H1 (cell line): ENCODE measurements at regions of chr12 and their contacts with region 1.

Region 1: DNA sequence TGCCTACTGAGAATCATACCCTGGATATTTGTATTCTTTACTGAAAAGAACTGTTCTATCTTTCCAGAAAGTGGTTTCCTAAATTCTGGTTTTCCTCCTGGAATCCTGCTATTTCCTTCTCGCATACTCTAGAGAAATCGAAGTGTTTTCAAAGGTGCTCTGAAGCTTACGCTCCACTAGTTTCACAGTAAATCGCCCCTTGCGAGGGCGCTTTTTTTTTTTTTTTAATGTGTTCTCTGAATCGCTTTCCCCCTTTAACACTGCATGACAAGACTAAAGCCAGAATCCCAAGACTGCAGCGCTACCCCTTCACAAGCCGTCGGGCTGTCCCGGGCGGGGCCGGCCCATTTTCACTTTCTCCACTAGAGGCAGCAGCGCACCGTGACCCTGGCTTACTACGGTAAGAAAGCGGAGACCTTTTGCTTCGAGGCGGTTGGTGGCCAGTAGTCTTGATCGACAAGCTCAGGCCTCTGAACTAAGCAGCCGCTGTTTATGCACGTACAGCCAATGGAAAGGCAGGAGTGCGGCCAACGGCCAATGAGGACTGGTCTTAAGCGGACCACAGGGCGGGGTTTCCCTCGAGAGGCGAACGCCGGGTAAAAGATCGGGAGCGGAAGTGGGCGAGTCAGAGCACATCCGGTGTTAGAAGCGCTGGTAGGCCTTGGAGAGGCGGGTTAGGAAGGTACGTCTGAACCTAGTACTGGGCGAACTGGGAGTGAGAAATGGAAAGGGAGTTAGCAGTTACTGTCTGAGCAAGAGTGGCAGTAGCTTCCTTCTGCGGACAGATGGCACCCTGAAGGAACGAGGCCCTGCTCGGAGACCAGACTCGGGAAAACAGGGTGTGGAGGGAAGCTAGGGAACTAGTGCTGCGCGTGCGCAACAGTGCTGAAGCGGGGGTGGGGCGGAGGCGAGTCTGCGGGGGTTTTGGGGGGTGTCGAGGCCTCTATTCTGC is at the start of gene TMBIM6:
- DNase-seq: peak; percentile 99 to 100
- H3K4me3 ChIP-seq: peak within 1 kb of the TSS; percentile 74 to 95 (median 82)
- H3K27ac ChIP-seq: peak within 1 kb of the TSS; percentile 93
- H3K4me1 ChIP-seq: peaks cover 0 to 3% (median 2%) of the 10 kb centered on the region in 4 experiments; a peak in 2 of 7 replicates
- H3K27me3 ChIP-seq: no peaks in the 10 kb centered on the region
- CTCF ChIP-seq: peak; percentile 84 to 96 (median 86)
- EP300 ChIP-seq: peak in 1 of 2 experiments; percentile 20; a peak in 1 of 3 replicates
- POLR2A ChIP-seq: peak; percentile 99
- RAD21 ChIP-seq: peak; percentile 55 to 70
- total RNA-seq, gene TMBIM6: 413 and 423 TPM in 2 replicates

Region 2: GRCh38 chr12:49623142-49623904 is 117.9 kb before region 1 on chr12 and contains the start of gene PRPF40B:
- CTCF ChIA-PET with region 1: interaction called, 3 read pairs
- POLR2A ChIA-PET with region 1: interaction called, 17 read pairs
- DNase-seq: peak; percentile 78 to 95
- H3K4me3 ChIP-seq: peak within 1 kb of the TSS; percentile 50 to 73 (median 66)
- H3K27ac ChIP-seq: peak within 1 kb of the TSS; percentile 56; the same call in 1 of the 2 replicates
- H3K4me1 ChIP-seq: peaks cover 0 to 7% (median 3%) of the 10 kb centered on the region in 4 experiments; a peak in 6 of 7 replicates
- H3K27me3 ChIP-seq: no peaks in the 10 kb centered on the region
- CTCF ChIP-seq: peak; percentile 47 to 56 (median 54)
- EP300 ChIP-seq: 0 out of 3 replicates have a peak, but pooled peaks of 1 of the 2 experiments have one; percentile 7
- POLR2A ChIP-seq: no peak; a peak in 1 of 3 replicates
- RAD21 ChIP-seq: peak; percentile 27 to 47; a peak in 3 of 4 replicates
- total RNA-seq, gene PRPF40B: 24.4 and 26.8 TPM in 2 replicates

Region 3: DNA sequence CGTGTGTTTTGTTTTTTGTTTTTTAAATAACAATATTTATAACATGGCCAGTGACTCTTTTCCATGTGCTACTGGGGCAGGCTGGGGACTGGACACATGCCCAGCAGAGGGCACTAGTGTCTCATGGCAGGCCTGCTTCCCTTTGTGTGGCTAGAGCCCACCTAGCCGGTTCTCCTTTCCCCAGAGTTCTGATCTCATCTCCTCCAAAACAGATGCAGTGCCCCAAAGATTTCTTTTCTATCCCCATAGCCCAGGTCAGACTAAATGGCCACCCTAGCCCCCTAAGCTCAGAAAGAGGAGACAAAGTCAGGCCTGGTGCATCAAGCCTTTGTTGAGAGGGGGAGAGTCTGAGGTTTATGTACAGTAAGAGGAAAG is 96.6 kb before region 1 on chr12:
- CTCF ChIA-PET with region 1: interaction called, 12 read pairs
- POLR2A ChIA-PET with region 1: interaction called, 21 read pairs
- DNase-seq: peak in 1 of 2 experiments; percentile 83
- H3K4me3 ChIP-seq: no peak overlapping the region
- H3K27ac ChIP-seq: no peak overlapping the region
- H3K4me1 ChIP-seq: no peaks in the 10 kb centered on the region
- H3K27me3 ChIP-seq: no peaks in the 10 kb centered on the region
- CTCF ChIP-seq: peak; percentile 87 to 93 (median 89)
- EP300 ChIP-seq: no peak
- POLR2A ChIP-seq: no peak
- RAD21 ChIP-seq: peak; percentile 97

Region 4: GRCh38 chr12:49662998-49663843 is 78.0 kb before region 1 on chr12:
- CTCF ChIA-PET with region 1: interaction called, 7 read pairs
- POLR2A ChIA-PET with region 1: interaction called, 17 read pairs
- DNase-seq: peak in 1 of 2 experiments; percentile 21
- H3K4me3 ChIP-seq: no peak overlapping the region
- H3K27ac ChIP-seq: no peak overlapping the region
- H3K4me1 ChIP-seq: peaks cover 3 to 6% (median 4%) of the 10 kb centered on the region in 4 experiments; a peak in 4 of 7 replicates
- H3K27me3 ChIP-seq: no peaks in the 10 kb centered on the region
- CTCF ChIP-seq: no peak
- EP300 ChIP-seq: no peak
- POLR2A ChIP-seq: no peak
- RAD21 ChIP-seq: no peak

Region 5: DNA sequence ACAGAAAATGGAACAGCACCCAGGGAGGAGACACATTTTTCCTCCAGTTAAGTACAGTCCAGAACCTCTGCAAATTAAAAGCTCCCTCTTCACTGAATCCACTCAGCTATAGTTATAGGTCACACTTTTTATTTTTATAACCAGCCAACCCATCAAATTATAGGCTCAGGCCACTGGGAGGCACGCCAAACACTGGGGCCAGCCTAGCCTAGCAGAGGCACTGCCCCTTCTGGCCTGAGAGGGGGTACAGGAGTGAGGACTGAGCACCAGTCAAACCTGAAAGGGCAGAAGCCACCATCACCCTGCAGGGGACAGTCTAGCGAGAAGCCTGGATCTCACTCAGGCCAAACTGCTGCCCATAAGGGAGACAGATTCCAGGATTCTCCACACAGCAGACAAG is 53.3 kb before region 1 on chr12:
- CTCF ChIA-PET with region 1: interaction called, 5 read pairs
- POLR2A ChIA-PET with region 1: interaction called, 19 read pairs
- DNase-seq: no peak
- H3K4me3 ChIP-seq: no peak overlapping the region
- H3K27ac ChIP-seq: no peak overlapping the region
- H3K4me1 ChIP-seq: peaks cover 0 to 7% (median 4%) of the 10 kb centered on the region in 4 experiments; a peak in 4 of 7 replicates
- H3K27me3 ChIP-seq: no peaks in the 10 kb centered on the region
- CTCF ChIP-seq: peak; percentile 68 to 78 (median 70)
- EP300 ChIP-seq: no peak
- POLR2A ChIP-seq: no peak
- RAD21 ChIP-seq: peak; percentile 32 to 52; a peak in 3 of 4 replicates

Region 6: DNA sequence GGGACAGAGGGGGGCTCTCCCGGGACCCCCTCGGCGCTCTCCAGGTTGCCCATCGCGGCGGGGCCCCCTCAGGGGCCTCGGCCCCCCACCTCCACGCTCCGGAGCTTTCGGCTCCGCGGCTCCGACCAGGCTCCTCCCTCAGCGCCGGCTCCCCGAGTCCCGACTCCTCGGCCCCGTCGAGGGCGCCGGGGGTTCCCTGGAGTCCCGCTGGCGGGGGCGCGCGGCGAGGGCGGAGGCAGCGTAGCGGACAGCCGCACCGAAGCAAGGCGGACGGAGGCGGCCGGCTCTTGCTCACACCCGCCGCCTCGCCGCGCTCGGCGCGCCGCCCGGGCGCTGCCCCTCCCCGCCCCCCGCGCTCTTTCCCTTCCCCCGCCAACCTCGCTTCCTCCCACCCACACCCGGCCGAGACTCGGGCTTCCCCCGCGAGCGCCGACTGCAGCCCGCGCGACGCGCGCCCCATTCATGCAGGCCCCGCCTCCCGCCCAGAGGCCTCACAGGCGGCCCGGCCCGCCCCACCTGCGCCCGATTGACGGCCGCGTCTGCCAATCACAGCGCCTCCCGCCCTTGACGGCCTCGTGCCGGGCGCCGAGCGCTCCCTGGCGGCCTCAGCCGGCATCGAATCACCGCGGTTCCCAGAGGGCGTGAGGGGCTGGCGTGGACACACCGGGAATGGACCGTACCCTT is 33.9 kb before region 1 on chr12 and contains the start of gene FMNL3:
- CTCF ChIA-PET with region 1: interaction called, 10 read pairs
- POLR2A ChIA-PET with region 1: interaction called, 22 read pairs
- DNase-seq: peak; percentile 77 to 99
- H3K4me3 ChIP-seq: peak within 1 kb of the TSS; percentile 53 to 82 (median 75)
- H3K27ac ChIP-seq: no peak within 1 kb of the TSS
- H3K4me1 ChIP-seq: peaks cover 3 to 27% (median 8%) of the 10 kb centered on the region in 4 experiments
- H3K27me3 ChIP-seq: peaks cover 1 to 9% (median 6%) of the 10 kb centered on the region in 4 experiments
- CTCF ChIP-seq: peak; percentile 87 to 96 (median 88)
- EP300 ChIP-seq: no peak
- POLR2A ChIP-seq: peak in 1 of 2 experiments; percentile 45; a peak in 2 of 3 replicates
- RAD21 ChIP-seq: peak; percentile 92 to 98
- total RNA-seq, gene FMNL3: 27.6 and 29.0 TPM in 2 replicates

Region 7: GRCh38 chr12:49763006-49763591 is 21.9 kb after region 1 on chr12:
- CTCF ChIA-PET with region 1: interaction called, 5 read pairs
- POLR2A ChIA-PET with region 1: interaction called, 20 read pairs
- DNase-seq: peak; percentile 38 to 92
- H3K4me3 ChIP-seq: no peak overlapping the region
- H3K27ac ChIP-seq: no peak overlapping the region
- H3K4me1 ChIP-seq: peaks cover 0 to 4% (median 0%) of the 10 kb centered on the region in 4 experiments; a peak in 1 of 7 replicates
- H3K27me3 ChIP-seq: no peaks in the 10 kb centered on the region
- CTCF ChIP-seq: peak; percentile 83 to 89 (median 87)
- EP300 ChIP-seq: no peak
- POLR2A ChIP-seq: no peak
- RAD21 ChIP-seq: peak; percentile 50 to 54; a peak in 3 of 4 replicates

Region 8: GRCh38 chr12:49930515-49931288 is 189.5 kb after region 1 on chr12:
- CTCF ChIA-PET with region 1: no interaction called
- POLR2A ChIA-PET with region 1: no interaction called
- DNase-seq: no peak
- H3K4me3 ChIP-seq: no peak overlapping the region
- H3K27ac ChIP-seq: no peak overlapping the region
- H3K4me1 ChIP-seq: no peaks in the 10 kb centered on the region
- H3K27me3 ChIP-seq: no peaks in the 10 kb centered on the region; a peak in 1 of 7 replicates
- CTCF ChIP-seq: no peak
- EP300 ChIP-seq: no peak
- POLR2A ChIP-seq: no peak
- RAD21 ChIP-seq: no peak